Activated CD8-positive, alpha-beta T cell treated with anti-CD3 and anti-CD28 coated beads, Interleukin-2, amount 10 ng/mL, durations not matched to agents 7 days and 5 days (primary cell): ENCODE measurements at regions of chr5 and their contacts with region 1.

Region 1: GRCh38 chr5:123423278-123424149 is at the start of gene CEP120:
- DNase-seq: peak; percentile 99
- ATAC-seq: peak; percentile 98
- H3K4me3 Mint-ChIP-seq: no peak within 1 kb of the TSS
- H3K27ac Mint-ChIP-seq: no peak within 1 kb of the TSS
- H3K4me1 Mint-ChIP-seq: peaks cover 23% of the 10 kb centered on the region
- H3K27me3 Mint-ChIP-seq: no peaks in the 10 kb centered on the region
- total RNA-seq, gene CEP120: 22.3 to 27.6 TPM

Region 2: DNA sequence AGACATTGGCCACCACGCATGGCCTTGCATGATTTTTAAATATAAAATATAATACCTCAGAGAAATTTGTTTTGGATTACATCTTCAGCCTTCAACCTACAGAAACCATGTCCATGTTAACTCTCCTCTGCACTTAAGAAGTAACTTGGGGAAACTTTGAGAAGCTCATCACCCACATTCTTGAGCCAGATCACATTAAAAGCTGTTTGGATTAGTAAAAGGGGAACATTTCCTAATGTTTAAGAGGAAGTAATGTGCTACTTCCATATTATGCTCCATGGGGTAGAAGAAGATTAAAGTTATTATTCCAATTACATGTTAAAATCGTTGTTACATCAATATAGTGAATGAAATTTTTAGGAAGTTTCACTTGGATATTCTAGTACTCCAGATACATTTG is 10.1 kb after region 1 on chr5:
- CTCF ChIA-PET with region 1: interaction called, 17 read pairs
- POLR2A ChIA-PET with region 1: interaction called, 17 read pairs
- DNase-seq: no peak
- ATAC-seq: no peak
- H3K4me3 Mint-ChIP-seq: no peak overlapping the region
- H3K27ac Mint-ChIP-seq: no peak overlapping the region
- H3K4me1 Mint-ChIP-seq: peaks cover 2% of the 10 kb centered on the region
- H3K27me3 Mint-ChIP-seq: peaks cover 6% of the 10 kb centered on the region

Region 3: GRCh38 chr5:123448017-123448617 is 24.6 kb after region 1 on chr5:
- CTCF ChIA-PET with region 1: interaction called, 9 read pairs
- POLR2A ChIA-PET with region 1: interaction called, 17 read pairs
- DNase-seq: no peak
- ATAC-seq: peak; percentile 81
- H3K4me3 Mint-ChIP-seq: peak overlapping the region; percentile 31
- H3K27ac Mint-ChIP-seq: no peak overlapping the region
- H3K4me1 Mint-ChIP-seq: peaks cover 11% of the 10 kb centered on the region
- H3K27me3 Mint-ChIP-seq: peaks cover 2% of the 10 kb centered on the region

Region 4: DNA sequence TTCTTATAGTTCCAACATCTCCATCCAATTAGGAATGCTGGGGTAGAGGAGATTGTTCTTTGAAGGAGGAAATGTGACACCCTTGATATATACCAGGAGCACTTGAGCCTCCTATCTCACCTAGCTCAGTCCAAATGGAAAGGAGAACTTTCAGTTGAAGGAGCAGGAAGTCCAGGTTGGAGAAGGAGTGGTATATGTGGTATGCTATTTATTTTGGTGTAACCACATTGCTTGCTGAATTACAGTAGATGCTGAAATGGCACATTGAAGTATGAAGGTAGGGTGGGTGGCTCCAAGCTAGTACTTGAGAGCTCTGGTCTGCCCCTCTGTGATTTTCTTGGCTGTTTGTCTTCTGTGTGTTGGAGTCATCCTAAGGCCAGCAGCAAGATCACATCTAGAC is 94.6 kb after region 1 on chr5:
- CTCF ChIA-PET with region 1: interaction called, 50 read pairs
- POLR2A ChIA-PET with region 1: interaction called, 83 read pairs
- DNase-seq: peak; percentile 22
- ATAC-seq: peak; percentile 26
- H3K4me3 Mint-ChIP-seq: no peak overlapping the region
- H3K27ac Mint-ChIP-seq: no peak overlapping the region
- H3K4me1 Mint-ChIP-seq: peaks cover 52% of the 10 kb centered on the region
- H3K27me3 Mint-ChIP-seq: no peaks in the 10 kb centered on the region

Region 5: GRCh38 chr5:123610665-123611405 is 187.3 kb after region 1 on chr5:
- CTCF ChIA-PET with region 1: interaction called, 37 read pairs
- POLR2A ChIA-PET with region 1: interaction called, 9 read pairs
- DNase-seq: peak; percentile 50
- ATAC-seq: peak; percentile 57
- H3K4me3 Mint-ChIP-seq: no peak overlapping the region
- H3K27ac Mint-ChIP-seq: no peak overlapping the region
- H3K4me1 Mint-ChIP-seq: peaks cover 5% of the 10 kb centered on the region
- H3K27me3 Mint-ChIP-seq: no peaks in the 10 kb centered on the region